IMR-90 (cell line): ENCODE measurements at regions of chr10 and their contacts with region 1.

Region 1: GRCh38 chr10:48215488-48216204 is 58.9 kb downstream of the FRMPD2 start:
- DNase-seq: peak; percentile 20
- ATAC-seq: peak; percentile 49
- H3K4me3 ChIP-seq: no peak overlapping the region
- H3K27ac ChIP-seq: no peak overlapping the region
- H3K4me1 ChIP-seq: no peaks in the 10 kb centered on the region
- H3K27me3 ChIP-seq: peaks cover 9% of the 10 kb centered on the region
- CTCF ChIP-seq: peak; percentile 58
- POLR2A ChIP-seq: no peak
- RAD21 ChIP-seq: peak; percentile 51

Region 2: GRCh38 chr10:48476279-48476982 is 260.8 kb after region 1 on chr10:
- CTCF ChIA-PET with region 1: no interaction called
- POLR2A ChIA-PET with region 1: no interaction called
- dilution Hi-C with region 1: no loop called
- in situ Hi-C with region 1: no loop called
- intact Hi-C with region 1: no loop called
- DNase-seq: no peak
- ATAC-seq: no peak
- H3K4me3 ChIP-seq: no peak overlapping the region
- H3K27ac ChIP-seq: no peak overlapping the region
- H3K4me1 ChIP-seq: peaks cover 2% of the 10 kb centered on the region
- H3K27me3 ChIP-seq: no peaks in the 10 kb centered on the region
- CTCF ChIP-seq: no peak
- POLR2A ChIP-seq: no peak
- RAD21 ChIP-seq: no peak

Region 3: GRCh38 chr10:48506147-48506917 is 290.7 kb after region 1 on chr10:
- CTCF ChIA-PET with region 1: no interaction called
- POLR2A ChIA-PET with region 1: no interaction called
- dilution Hi-C with region 1: no loop called
- in situ Hi-C with region 1: loop called (anchors 25 kb)
- intact Hi-C with region 1: loop called (anchors 2 kb)
- DNase-seq: peak; percentile 56
- ATAC-seq: peak; percentile 71
- H3K4me3 ChIP-seq: no peak overlapping the region
- H3K27ac ChIP-seq: no peak overlapping the region
- H3K4me1 ChIP-seq: peaks cover 14% of the 10 kb centered on the region
- H3K27me3 ChIP-seq: no peaks in the 10 kb centered on the region
- CTCF ChIP-seq: peak; percentile 55
- POLR2A ChIP-seq: no peak
- RAD21 ChIP-seq: peak; percentile 63

Region 4: DNA sequence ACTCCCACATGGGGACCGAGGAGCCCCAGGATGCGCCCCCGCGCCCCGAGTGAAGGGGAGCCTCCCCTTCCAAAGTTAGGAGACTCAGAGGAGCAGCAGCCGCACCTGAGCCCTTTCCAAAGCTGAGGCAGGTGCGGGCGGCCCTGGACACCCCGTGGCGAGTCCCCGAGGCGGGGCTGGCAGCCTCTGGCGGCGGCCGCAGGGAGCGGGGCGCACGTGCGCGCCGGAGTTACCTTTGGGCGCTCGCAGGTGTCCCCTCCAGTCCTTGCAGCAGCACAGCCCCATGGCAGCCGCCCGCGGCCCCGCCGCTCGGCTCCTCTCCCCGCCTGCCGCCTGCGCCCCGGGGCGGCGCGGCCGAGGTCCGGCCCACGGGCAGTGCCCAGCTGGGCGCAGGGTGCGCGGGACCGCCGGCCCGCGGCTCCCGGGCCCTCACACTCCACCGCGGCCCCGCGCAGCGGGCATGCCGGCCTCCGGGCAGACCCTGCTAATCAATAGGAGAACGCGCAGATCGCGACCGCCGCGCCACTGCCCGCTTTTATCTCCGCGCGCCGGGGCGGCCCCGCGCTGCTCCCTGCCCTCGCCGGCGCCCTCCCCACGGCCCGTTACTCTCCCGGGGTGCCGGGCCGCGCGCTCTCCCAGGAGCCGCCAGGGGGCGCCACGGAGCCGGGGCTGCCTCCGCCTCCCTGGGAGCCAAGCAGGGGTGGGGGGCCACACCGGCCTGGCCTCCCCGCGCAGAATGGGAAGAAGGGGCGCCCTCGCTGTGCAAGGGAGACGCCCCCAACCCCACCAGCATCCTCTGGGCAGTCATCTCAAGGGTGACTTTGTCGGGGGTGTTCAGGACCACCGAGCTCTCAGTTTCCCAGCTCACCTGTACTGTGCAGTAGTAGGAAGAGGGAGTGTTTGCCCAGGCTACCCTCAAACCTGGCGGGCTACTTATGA is 308.4 kb after region 1 on chr10:
- CTCF ChIA-PET with region 1: no interaction called
- POLR2A ChIA-PET with region 1: no interaction called
- dilution Hi-C with region 1: no loop called
- in situ Hi-C with region 1: loop called (anchors 25 kb)
- intact Hi-C with region 1: no loop called
- DNase-seq: no peak
- ATAC-seq: peak; percentile 55
- H3K4me3 ChIP-seq: peak overlapping the region; percentile 42
- H3K27ac ChIP-seq: peak overlapping the region; percentile 15; the same call in 1 of the 2 replicates
- H3K4me1 ChIP-seq: peaks cover 21% of the 10 kb centered on the region
- H3K27me3 ChIP-seq: no peaks in the 10 kb centered on the region
- CTCF ChIP-seq: peak; percentile 59
- POLR2A ChIP-seq: no peak
- RAD21 ChIP-seq: peak; percentile 30